Naive thymus-derived CD4-positive, alpha-beta T cell (primary cell): ENCODE measurements at regions of chr10 and their contacts with region 1.

Region 1: DNA sequence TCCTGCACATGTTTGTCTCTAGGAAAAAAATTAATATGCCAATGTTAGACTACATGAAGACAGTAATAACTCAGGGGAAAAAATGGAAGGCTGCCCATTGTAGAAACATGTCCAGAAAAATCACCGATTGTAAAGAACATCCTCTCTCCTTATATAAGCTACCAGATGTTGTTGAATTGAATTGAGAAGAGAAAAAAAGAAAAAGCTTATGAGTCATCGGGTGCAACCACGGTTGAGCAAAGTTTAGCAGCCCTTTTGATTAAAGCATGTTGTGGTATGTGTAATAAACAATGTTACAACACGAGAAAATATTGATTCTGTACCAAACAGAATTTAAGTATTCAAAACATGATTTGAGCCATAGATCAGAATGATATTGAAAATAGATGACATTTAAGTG is 102.3 kb upstream of the ARHGAP21 start:
- DNase-seq: no peak
- ATAC-seq: no peak
- H3K4me3 ChIP-seq: no peak overlapping the region
- H3K4me3 Mint-ChIP-seq: peak overlapping the region in 8 of 10 donors; percentile 11 to 62 (median 44)
- H3K27ac ChIP-seq: no peak overlapping the region
- H3K27ac Mint-ChIP-seq: peak overlapping the region in 6 of 9 donors; percentile 1 to 67 (median 36)
- H3K4me1 ChIP-seq: peaks cover 3 to 21% of the 10 kb centered on the region in 2 donors
- H3K4me1 Mint-ChIP-seq: peaks cover 14 to 54% (median 46%) of the 10 kb centered on the region in 7 donors
- H3K27me3 ChIP-seq: no peaks in the 10 kb centered on the region
- H3K27me3 Mint-ChIP-seq: no peaks in the 10 kb centered on the region

Region 2: DNA sequence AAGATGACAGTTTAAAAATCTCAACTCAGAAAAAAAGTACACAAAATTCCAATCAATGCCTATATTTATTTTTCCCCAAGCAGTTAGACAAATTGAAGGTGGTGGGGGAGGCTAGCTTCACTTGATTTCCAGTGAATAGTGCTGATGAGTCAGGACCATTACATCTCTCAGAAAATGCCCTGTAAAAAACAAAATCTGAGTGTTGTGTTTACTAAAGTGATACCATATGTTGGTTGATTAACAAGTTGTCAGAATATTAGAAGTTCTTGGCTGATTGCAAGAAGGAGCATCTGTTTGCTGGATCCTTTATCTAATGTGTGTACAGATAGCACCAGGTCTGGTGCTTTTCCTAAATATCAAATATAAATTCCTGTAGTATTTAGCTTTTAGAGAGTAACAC is 648.4 kb before region 1 on chr10:
- CTCF ChIA-PET with region 1: no interaction called
- POLR2A ChIA-PET with region 1: no interaction called
- intact Hi-C with region 1: no loop called
- DNase-seq: no peak
- ATAC-seq: no peak
- H3K4me3 ChIP-seq: no peak overlapping the region
- H3K4me3 Mint-ChIP-seq: no peak overlapping the region
- H3K27ac ChIP-seq: no peak overlapping the region
- H3K27ac Mint-ChIP-seq: no peak overlapping the region
- H3K4me1 ChIP-seq: no peaks in the 10 kb centered on the region
- H3K4me1 Mint-ChIP-seq: no peaks in the 10 kb centered on the region
- H3K27me3 ChIP-seq: no peaks in the 10 kb centered on the region
- H3K27me3 Mint-ChIP-seq: peaks cover 0 to 19% (median 9%) of the 10 kb centered on the region in 5 donors

Region 3: DNA sequence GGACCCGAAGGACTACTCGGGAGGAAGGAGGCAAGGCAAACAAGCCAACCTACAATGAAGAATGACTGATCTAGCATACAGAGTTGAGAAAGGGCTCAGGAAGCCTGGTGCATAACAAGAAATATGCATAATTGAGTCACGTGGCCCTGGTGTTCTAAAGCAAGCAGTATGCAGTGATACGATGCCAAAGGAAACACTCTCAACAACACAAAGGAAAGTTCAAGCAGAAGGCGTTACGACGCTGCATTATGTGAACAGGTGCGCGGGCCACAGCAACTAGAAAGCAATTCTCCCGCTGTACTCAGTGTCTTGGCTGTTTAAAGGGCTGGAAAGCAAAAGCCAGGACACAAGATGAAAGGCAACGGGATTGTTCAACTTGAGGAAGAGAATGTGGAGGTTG is 25.6 kb after region 1 on chr10:
- CTCF ChIA-PET with region 1: no interaction called
- POLR2A ChIA-PET with region 1: no interaction called
- intact Hi-C with region 1: loop called in 1 of 2 experiments (anchors 1 kb)
- DNase-seq: peak in 7 of 9 donors; percentile 29 to 62 (median 43)
- ATAC-seq: peak; percentile 66
- H3K4me3 ChIP-seq: no peak overlapping the region
- H3K4me3 Mint-ChIP-seq: peak overlapping the region; percentile 12 to 79 (median 66)
- H3K27ac ChIP-seq: no peak overlapping the region
- H3K27ac Mint-ChIP-seq: peak overlapping the region in 8 of 9 donors; percentile 5 to 95 (median 84)
- H3K4me1 ChIP-seq: no peaks in the 10 kb centered on the region
- H3K4me1 Mint-ChIP-seq: peaks cover 5 to 16% (median 14%) of the 10 kb centered on the region in 7 donors
- H3K27me3 ChIP-seq: no peaks in the 10 kb centered on the region
- H3K27me3 Mint-ChIP-seq: peaks cover 0 to 5% (median 0%) of the 10 kb centered on the region in 5 donors

Region 4: DNA sequence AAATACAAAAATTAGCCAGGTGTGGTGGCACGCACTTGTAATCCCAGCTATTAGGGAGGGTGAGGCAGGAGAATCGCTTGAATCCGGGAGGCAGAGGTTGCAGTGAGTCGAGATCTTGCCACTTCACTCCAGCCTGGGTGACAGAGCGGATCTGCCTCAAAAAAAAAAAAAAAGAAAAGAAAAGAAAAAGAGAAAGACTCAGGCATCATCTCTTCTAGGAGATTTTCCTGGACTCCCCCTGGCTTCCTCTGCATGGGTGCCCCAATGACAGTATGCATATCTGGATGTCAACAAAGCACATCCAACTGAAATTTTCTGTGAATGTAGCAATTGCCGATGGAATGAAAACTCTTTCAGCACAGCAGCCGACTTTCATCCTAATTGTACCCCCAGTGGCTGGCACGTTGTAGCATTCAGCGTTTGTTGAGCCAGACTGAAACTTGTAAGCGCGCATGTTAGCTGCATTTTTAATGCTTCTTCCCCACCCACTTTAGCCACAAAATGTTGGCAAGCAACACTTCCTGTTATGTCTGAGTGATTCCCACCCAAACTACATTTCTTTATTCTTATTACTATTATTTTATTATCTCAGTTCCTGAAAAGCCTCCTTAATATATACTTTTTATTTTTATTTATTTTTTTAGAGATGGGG is 56.2 kb after region 1 on chr10:
- CTCF ChIA-PET with region 1: no interaction called
- POLR2A ChIA-PET with region 1: no interaction called
- intact Hi-C with region 1: loop called in 1 of 2 experiments (anchors 10 kb)
- DNase-seq: peak in 7 of 9 donors; percentile 42 to 68 (median 63)
- ATAC-seq: peak; percentile 81
- H3K4me3 ChIP-seq: peak overlapping the region; percentile 44
- H3K4me3 Mint-ChIP-seq: peak overlapping the region; percentile 72 to 88 (median 86)
- H3K27ac ChIP-seq: peak overlapping the region; percentile 53
- H3K27ac Mint-ChIP-seq: peak overlapping the region; percentile 36 to 99 (median 95)
- H3K4me1 ChIP-seq: peaks cover 15 to 54% of the 10 kb centered on the region in 2 donors
- H3K4me1 Mint-ChIP-seq: peaks cover 27 to 72% (median 65%) of the 10 kb centered on the region in 7 donors
- H3K27me3 ChIP-seq: no peaks in the 10 kb centered on the region
- H3K27me3 Mint-ChIP-seq: no peaks in the 10 kb centered on the region

Region 5: DNA sequence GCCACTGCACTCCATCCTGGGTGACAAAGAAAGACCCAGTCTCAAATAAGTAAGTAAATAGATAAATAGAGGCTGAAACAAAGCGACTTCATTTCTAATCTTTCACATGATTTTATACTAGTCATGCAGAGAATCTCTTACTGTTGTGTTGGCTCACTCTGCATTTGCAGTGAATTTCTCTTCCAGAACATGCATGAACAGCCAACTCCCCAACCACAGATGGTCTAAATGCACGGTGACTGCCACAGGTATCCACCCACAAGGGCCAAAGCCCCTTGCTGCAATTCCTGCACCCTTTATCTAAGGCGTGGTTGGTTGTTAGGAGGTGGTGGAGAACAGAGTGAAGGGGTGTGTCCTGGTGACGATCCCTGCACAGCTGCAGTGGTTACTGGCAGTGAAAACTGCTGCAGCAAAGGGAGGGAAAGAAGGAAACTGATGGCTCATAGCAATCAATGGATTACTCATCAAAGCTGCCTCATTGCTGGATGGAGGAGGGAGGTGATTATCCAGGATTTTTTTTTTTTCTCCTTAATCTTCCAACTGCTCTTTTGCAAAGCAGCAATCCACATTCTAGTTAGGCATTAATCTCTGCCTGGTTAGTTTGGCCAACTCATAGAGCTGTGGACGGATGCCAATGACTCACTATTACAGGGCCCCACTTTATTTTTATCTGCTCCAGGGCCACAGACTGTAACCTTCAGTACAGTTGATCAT is 75.8 kb after region 1 on chr10:
- CTCF ChIA-PET with region 1: no interaction called
- POLR2A ChIA-PET with region 1: no interaction called
- intact Hi-C with region 1: loop called in 1 of 2 experiments (anchors 10 kb)
- DNase-seq: no peak
- ATAC-seq: peak; percentile 42
- H3K4me3 ChIP-seq: no peak overlapping the region
- H3K4me3 Mint-ChIP-seq: peak overlapping the region in 2 of 10 donors; percentile 9 to 24
- H3K27ac ChIP-seq: no peak overlapping the region
- H3K27ac Mint-ChIP-seq: peak overlapping the region in 5 of 9 donors; percentile 12 to 68 (median 43)
- H3K4me1 ChIP-seq: peaks cover 14 to 22% of the 10 kb centered on the region in 2 donors
- H3K4me1 Mint-ChIP-seq: peaks cover 19 to 40% (median 29%) of the 10 kb centered on the region in 7 donors
- H3K27me3 ChIP-seq: no peaks in the 10 kb centered on the region
- H3K27me3 Mint-ChIP-seq: no peaks in the 10 kb centered on the region

Region 6: GRCh38 chr10:24952707-24953645 is 127.0 kb after region 1 on chr10:
- CTCF ChIA-PET with region 1: interaction called, 4 read pairs
- POLR2A ChIA-PET with region 1: no interaction called
- intact Hi-C with region 1: loop called in 1 of 2 experiments (anchors 1 kb)
- DNase-seq: peak; percentile 31 to 66 (median 55)
- ATAC-seq: peak; percentile 89
- H3K4me3 ChIP-seq: peak overlapping the region; percentile 55
- H3K4me3 Mint-ChIP-seq: peak overlapping the region; percentile 76 to 89 (median 86)
- H3K27ac ChIP-seq: peak overlapping the region; percentile 59
- H3K27ac Mint-ChIP-seq: peak overlapping the region; percentile 49 to 91 (median 83)
- H3K4me1 ChIP-seq: peaks cover 4 to 6% of the 10 kb centered on the region in 2 donors
- H3K4me1 Mint-ChIP-seq: peaks cover 7 to 30% (median 18%) of the 10 kb centered on the region in 7 donors
- H3K27me3 ChIP-seq: no peaks in the 10 kb centered on the region
- H3K27me3 Mint-ChIP-seq: no peaks in the 10 kb centered on the region

Region 7: GRCh38 chr10:24962995-24963394 is 137.0 kb after region 1 on chr10:
- CTCF ChIA-PET with region 1: no interaction called
- POLR2A ChIA-PET with region 1: no interaction called
- intact Hi-C with region 1: no loop called
- DNase-seq: no peak
- ATAC-seq: no peak
- H3K4me3 ChIP-seq: no peak overlapping the region
- H3K4me3 Mint-ChIP-seq: no peak overlapping the region
- H3K27ac ChIP-seq: no peak overlapping the region
- H3K27ac Mint-ChIP-seq: no peak overlapping the region
- H3K4me1 ChIP-seq: no peaks in the 10 kb centered on the region
- H3K4me1 Mint-ChIP-seq: peaks cover 0 to 3% (median 0%) of the 10 kb centered on the region in 7 donors
- H3K27me3 ChIP-seq: no peaks in the 10 kb centered on the region
- H3K27me3 Mint-ChIP-seq: peaks cover 0 to 6% (median 0%) of the 10 kb centered on the region in 5 donors

Region 8: DNA sequence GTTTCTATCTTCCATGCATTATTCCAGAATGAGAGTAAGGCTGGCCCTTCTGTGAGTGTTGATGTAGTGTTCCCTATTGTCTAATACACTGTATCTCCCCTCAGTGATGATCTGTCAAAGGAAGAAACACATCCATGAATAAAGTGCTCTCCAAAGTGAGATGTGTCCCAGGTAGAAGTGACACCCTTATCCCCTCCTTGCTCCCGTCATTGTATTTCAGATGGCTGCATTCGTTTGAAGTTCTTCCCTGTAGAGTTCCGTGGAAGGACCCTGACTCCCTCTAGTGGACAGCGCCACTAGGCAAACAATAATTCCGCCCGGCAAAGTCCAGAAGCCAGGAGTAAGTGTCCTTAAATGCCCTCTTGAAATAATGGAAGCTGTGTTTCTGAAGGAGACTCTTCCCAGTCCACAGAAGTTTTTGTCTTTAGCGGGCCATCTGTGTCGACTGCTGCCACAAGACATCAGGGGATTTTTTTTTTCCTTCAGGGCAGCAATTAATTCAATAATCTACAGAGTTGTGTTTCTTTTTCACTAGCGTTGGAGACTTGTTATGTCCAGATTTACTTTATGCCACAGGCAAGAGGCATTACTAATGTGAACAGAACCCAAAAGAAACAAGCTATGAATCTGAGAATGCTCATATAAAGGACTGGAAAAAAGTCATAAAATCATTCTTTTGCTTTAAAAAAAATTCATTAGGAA is 255.0 kb after region 1 on chr10:
- CTCF ChIA-PET with region 1: no interaction called
- POLR2A ChIA-PET with region 1: no interaction called
- intact Hi-C with region 1: loop called in 1 of 2 experiments (anchors 10 kb)
- DNase-seq: peak; percentile 4 to 53 (median 42)
- ATAC-seq: peak; percentile 79
- H3K4me3 ChIP-seq: no peak overlapping the region
- H3K4me3 Mint-ChIP-seq: no peak overlapping the region
- H3K27ac ChIP-seq: no peak overlapping the region
- H3K27ac Mint-ChIP-seq: no peak overlapping the region
- H3K4me1 ChIP-seq: peaks cover 0 to 4% of the 10 kb centered on the region in 2 donors
- H3K4me1 Mint-ChIP-seq: peaks cover 0 to 8% (median 4%) of the 10 kb centered on the region in 7 donors
- H3K27me3 ChIP-seq: peaks cover 0 to 4% of the 10 kb centered on the region in 2 donors
- H3K27me3 Mint-ChIP-seq: peaks cover 0 to 23% (median 5%) of the 10 kb centered on the region in 5 donors